ENCODE measurements at regions of chr3 and their contacts with region 1.

Region 1: GRCh38 chr3:48064292-48064829 is 48.1 kb upstream of the MAP4 start:
- DNase-seq: no peak
- H3K4me3 ChIP-seq: no peak overlapping the region
- H3K27ac ChIP-seq: no peak overlapping the region
- H3K4me1 ChIP-seq: no peaks in the 10 kb centered on the region
- H3K27me3 ChIP-seq: no peaks in the 10 kb centered on the region
- CTCF ChIP-seq: no peak
- EP300 ChIP-seq: no peak
- POLR2A ChIP-seq: no peak

Region 2: DNA sequence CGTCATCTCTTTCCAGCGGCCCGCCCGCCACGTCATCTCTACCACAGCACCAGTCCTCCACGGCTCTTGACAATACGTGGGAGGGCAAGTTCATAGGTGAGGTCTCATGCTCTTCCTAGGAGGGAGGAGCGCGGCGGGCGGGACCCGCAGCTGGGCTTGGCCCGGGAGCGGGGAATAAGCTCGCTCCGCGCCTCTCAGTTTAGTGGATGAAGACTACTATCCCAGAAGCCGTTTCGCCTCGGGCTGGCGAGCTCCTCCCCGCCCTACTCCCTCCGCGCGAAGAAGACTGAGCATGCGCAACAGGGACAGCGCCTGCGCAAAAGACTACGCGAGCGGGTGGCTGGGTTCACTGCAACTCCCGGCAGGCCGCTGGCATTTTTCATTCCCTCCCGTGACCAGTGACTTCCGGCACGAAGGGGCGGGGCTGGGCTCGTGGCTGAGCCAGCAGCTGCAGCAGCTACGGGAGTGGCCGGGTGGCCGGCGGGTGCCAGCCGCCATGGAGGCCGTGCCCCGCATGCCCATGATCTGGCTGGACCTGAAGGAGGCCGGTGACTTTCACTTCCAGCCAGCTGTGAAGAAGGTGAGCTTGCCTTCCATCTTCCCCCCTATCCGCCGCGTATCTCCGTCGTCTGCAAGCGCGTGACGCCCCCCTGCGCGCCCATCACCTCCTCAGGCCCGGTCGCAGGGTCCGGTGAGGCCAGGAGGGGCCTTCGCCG is 683.6 kb before region 1 on chr3 and contains the start of gene PTPN23:
- intact Hi-C with region 1: loop called in 1 of 4 experiments (anchors 10 kb)
- DNase-seq: peak; percentile 99
- H3K4me3 ChIP-seq: peak within 1 kb of the TSS; percentile 99
- H3K27ac ChIP-seq: peak within 1 kb of the TSS; percentile 83 to 86
- H3K4me1 ChIP-seq: peaks cover 7% of the 10 kb centered on the region
- H3K27me3 ChIP-seq: no peaks in the 10 kb centered on the region
- CTCF ChIP-seq: peak in 2 of 3 donors; percentile 15 to 38
- EP300 ChIP-seq: peak; percentile 29
- POLR2A ChIP-seq: peak; percentile 94
- total RNA-seq, gene PTPN23: 16.4 to 56.9 (median 44.4) TPM

Region 3: DNA sequence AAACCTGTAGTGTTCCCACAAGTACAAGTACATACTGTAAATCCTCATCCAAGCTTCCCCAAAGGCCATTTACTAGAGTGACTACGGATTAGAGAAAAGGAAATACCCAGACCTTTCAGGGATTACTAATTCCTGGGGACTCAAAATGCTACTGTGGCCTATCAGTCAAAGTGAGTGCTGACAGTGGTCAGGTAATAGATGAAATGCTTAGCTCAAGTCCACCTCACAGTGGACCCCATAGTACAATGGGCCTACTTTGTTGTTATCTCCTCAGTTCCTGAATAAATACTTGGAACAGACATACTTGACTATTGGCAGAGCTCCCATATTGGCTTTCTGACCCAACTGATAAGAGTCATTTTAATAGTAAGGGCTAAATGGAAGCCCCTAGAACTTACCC is 109.8 kb before region 1 on chr3:
- intact Hi-C with region 1: no loop called
- DNase-seq: no peak
- H3K4me3 ChIP-seq: no peak overlapping the region
- H3K27ac ChIP-seq: no peak overlapping the region
- H3K4me1 ChIP-seq: peaks cover 3% of the 10 kb centered on the region
- H3K27me3 ChIP-seq: no peaks in the 10 kb centered on the region
- CTCF ChIP-seq: no peak
- EP300 ChIP-seq: no peak
- POLR2A ChIP-seq: no peak